CD4-positive, alpha-beta T cell (primary cell): ENCODE measurements at regions of chr9 and their contacts with region 1.

Region 1: DNA sequence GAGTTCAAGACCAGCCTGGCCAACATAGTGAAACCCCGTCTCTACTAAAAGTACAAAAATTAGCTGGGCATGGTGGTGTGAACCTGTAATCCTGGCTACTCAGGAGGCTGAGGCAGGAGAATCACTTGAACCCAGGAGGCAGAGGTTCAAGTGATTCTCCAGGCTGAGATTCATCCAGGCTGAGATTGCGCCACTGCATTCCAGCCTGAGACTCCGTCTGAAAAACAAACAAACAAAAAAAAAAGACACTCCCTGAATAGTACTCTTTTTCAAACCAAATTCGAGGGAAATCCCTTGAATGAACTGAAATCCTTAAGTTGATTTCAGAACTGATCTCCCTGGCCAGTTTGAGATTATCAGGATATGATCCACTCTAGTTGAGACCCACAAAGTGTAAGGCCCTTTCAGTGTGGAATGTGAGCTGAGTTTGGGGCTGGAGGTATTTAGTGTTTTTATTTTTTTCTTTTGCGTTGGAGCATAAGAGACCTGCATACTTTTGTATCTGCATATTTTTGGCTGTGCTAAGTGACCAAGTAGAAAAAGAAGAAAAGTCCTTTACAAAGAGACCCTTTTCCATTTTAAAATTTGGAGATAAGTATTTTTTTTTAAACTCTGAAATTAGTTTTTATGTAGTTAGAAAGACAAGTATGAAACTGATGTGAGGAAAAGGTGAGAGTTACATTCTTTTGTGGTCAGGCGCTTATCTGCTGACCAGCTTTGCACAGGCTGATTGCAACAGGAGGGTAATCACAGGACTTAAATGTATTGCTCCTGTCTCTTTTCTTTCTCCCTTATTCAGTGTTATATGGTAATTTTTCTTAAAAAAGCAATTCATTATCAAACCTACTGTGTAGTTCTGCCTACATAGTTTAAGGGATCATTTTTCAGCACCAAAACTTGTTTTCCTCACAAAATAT is 42.9 kb downstream of the TMEFF1 start:
- DNase-seq: no peak
- ATAC-seq: no peak
- H3K4me3 ChIP-seq: no peak overlapping the region
- H3K4me3 Mint-ChIP-seq: no peak overlapping the region
- H3K27ac ChIP-seq: no peak overlapping the region
- H3K27ac Mint-ChIP-seq: no peak overlapping the region
- H3K4me1 ChIP-seq: no peaks in the 10 kb centered on the region
- H3K4me1 Mint-ChIP-seq: no peaks in the 10 kb centered on the region
- H3K27me3 ChIP-seq: no peaks in the 10 kb centered on the region
- H3K27me3 Mint-ChIP-seq: no peaks in the 10 kb centered on the region
- CTCF ChIP-seq: no peak

Region 2: DNA sequence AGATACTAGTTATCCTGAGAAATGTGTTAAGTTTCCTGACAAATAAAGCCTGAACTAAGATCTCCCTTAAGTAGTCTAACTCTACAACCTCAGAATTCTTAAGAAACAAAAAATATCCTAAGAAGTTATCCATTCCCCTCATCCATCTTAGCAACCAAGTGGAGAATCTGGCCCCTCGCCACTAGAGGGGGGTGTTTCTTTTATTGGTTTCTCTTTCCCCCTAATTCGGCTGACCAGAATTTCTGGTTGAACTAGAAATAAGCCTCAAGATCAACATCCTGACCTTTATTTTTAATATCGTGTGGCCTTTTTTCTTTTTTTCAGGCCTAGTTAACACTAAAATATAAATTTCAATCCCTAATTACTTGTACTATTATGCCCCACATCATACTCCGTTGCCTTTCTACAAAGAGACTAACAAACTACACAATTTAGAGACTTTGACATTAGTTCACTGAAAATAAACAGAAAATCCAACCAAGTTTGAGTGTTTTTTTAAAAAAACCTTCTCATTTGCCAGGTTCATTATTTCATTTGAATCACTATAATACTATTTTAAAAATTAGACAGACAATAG is 708.5 kb before region 1 on chr9:
- CTCF ChIA-PET with region 1: no interaction called
- POLR2A ChIA-PET with region 1: no interaction called
- intact Hi-C with region 1: no loop called
- DNase-seq: peak; percentile 53 to 85 (median 59)
- ATAC-seq: peak; percentile 84
- H3K4me3 ChIP-seq: no peak overlapping the region
- H3K4me3 Mint-ChIP-seq: no peak overlapping the region
- H3K27ac ChIP-seq: no peak overlapping the region
- H3K27ac Mint-ChIP-seq: no peak overlapping the region
- H3K4me1 ChIP-seq: no peaks in the 10 kb centered on the region
- H3K4me1 Mint-ChIP-seq: no peaks in the 10 kb centered on the region
- H3K27me3 ChIP-seq: no peaks in the 10 kb centered on the region
- H3K27me3 Mint-ChIP-seq: peaks cover 4% of the 10 kb centered on the region
- CTCF ChIP-seq: peak; percentile 95

Region 3: DNA sequence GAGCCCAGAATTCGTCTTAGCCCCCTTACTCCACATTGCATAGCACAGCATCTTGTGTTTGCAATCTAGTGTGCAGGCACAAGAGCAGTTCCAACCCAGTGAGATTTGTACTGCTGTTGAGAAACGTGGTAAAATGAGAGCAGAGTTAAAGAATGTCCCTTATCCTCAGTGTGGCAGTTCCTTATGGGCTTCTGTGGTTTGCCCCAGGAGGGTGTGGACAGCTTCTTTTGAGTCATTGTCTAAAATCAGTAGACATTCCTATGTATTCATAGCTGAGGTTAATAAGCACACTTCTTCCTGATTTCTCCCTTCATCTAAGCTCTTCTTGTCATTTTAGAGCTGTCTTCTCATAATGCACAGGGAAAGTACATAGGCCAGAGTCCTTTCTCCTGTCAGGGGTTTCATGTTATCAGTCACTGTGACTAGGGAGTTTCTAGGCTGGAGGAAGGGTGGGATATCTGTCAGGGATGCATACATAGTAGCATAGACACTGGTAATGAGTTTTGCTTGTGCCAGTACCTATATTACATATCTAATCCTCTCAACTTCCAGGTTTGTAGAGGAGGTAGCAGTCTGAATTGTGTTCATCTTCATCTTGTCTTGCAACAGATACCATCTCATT is 60.0 kb after region 1 on chr9:
- CTCF ChIA-PET with region 1: no interaction called
- POLR2A ChIA-PET with region 1: no interaction called
- intact Hi-C with region 1: loop called in 1 of 2 experiments (anchors 10 kb)
- DNase-seq: no peak
- ATAC-seq: no peak
- H3K4me3 ChIP-seq: no peak overlapping the region
- H3K4me3 Mint-ChIP-seq: no peak overlapping the region
- H3K27ac ChIP-seq: no peak overlapping the region
- H3K27ac Mint-ChIP-seq: no peak overlapping the region
- H3K4me1 ChIP-seq: no peaks in the 10 kb centered on the region
- H3K4me1 Mint-ChIP-seq: no peaks in the 10 kb centered on the region
- H3K27me3 ChIP-seq: no peaks in the 10 kb centered on the region
- H3K27me3 Mint-ChIP-seq: no peaks in the 10 kb centered on the region
- CTCF ChIP-seq: no peak